ENCODE measurements at regions of chrX and their contacts with region 1.

Region 1: GRCh38 chrX:70433848-70434351 is 10.7 kb upstream of the DLG3 start:
- DNase-seq: peak; percentile 75
- H3K4me3 Mint-ChIP-seq: peak overlapping the region; percentile 84
- H3K27ac Mint-ChIP-seq: peak overlapping the region; percentile 87
- H3K4me1 Mint-ChIP-seq: peaks cover 32% of the 10 kb centered on the region
- H3K27me3 Mint-ChIP-seq: peaks cover 23% of the 10 kb centered on the region

Region 2: GRCh38 chrX:70226048-70226447 is 207.9 kb before region 1 on chrX:
- CTCF ChIA-PET with region 1: no interaction called
- POLR2A ChIA-PET with region 1: no interaction called
- DNase-seq: no peak
- H3K4me3 Mint-ChIP-seq: no peak overlapping the region
- H3K27ac Mint-ChIP-seq: no peak overlapping the region
- H3K4me1 Mint-ChIP-seq: no peaks in the 10 kb centered on the region
- H3K27me3 Mint-ChIP-seq: no peaks in the 10 kb centered on the region

Region 3: GRCh38 chrX:70386235-70386634 is 47.7 kb before region 1 on chrX:
- CTCF ChIA-PET with region 1: no interaction called
- POLR2A ChIA-PET with region 1: no interaction called
- DNase-seq: no peak
- H3K4me3 Mint-ChIP-seq: no peak overlapping the region
- H3K27ac Mint-ChIP-seq: no peak overlapping the region
- H3K4me1 Mint-ChIP-seq: peaks cover 16% of the 10 kb centered on the region
- H3K27me3 Mint-ChIP-seq: no peaks in the 10 kb centered on the region

Region 4: DNA sequence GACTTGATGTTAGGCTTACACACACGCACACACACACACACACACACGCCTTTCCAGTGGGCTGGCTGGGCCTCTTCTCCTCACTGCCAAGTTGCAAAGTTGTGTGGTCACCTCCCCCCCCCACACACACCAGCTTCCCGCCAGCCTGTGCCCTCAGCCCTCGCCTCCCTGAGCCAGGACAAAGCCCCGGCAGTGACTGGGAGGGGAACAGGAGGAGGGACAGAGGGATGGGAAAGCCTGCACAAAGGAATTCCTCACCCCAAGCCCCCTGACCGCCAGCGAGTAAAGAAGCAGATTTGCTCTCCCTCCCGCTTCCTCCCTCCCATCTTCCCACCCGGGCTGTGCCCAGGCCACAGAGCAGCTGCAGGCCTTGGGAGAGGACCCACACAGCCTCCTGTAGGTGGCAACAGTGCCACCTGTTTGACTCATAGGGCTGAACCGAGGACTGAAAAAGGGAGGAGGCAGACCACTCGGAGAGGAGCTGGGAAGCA is 11.0 kb before region 1 on chrX and contains the start of gene GDPD2:
- CTCF ChIA-PET with region 1: interaction called, 28 read pairs
- POLR2A ChIA-PET with region 1: no interaction called
- DNase-seq: no peak
- H3K4me3 Mint-ChIP-seq: no peak within 1 kb of the TSS
- H3K27ac Mint-ChIP-seq: no peak within 1 kb of the TSS
- H3K4me1 Mint-ChIP-seq: no peaks in the 10 kb centered on the region
- H3K27me3 Mint-ChIP-seq: no peaks in the 10 kb centered on the region
- total RNA-seq, gene GDPD2: 0.22 to 0.23 TPM

Region 5: DNA sequence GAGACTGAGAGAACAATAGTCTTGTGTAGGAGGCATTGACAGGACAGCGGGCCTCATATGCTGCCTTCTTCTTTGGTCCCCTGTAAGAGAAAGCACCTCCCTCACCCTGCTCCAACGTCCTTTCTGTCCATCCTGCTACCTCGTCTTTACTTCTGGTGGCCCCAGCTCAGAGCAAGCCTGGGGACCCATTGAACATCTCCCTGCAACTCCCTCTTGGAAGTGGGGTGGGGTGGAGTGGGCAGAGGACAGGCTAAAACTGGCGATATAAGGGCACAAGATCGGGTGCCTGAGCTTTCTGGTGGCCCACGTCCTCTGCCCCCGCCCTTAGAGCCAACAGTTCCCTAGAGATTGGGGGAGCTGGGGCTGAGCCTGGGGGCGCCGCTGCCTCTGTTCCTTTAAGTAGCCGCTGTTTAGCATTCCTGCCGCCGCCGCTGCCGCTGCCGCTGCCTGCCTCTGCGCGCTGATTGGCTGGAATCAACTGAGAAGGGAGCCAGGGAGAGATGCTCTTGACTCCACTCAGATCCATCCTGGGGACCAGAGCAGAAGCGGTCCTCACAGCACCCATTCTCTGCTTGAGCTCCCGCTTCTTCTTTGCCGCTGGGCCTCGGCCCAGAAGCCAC is 10.5 kb after region 1 on chrX and contains the start of gene DLG3:
- CTCF ChIA-PET with region 1: interaction called, 16 read pairs
- POLR2A ChIA-PET with region 1: no interaction called
- DNase-seq: no peak
- H3K4me3 Mint-ChIP-seq: no peak within 1 kb of the TSS
- H3K27ac Mint-ChIP-seq: no peak within 1 kb of the TSS
- H3K4me1 Mint-ChIP-seq: peaks cover 4% of the 10 kb centered on the region
- H3K27me3 Mint-ChIP-seq: peaks cover 50% of the 10 kb centered on the region
- total RNA-seq, gene DLG3: 19.9 to 20.1 TPM

Region 6: GRCh38 chrX:70452143-70452733 is 18.3 kb after region 1 on chrX:
- CTCF ChIA-PET with region 1: interaction called, 22 read pairs
- POLR2A ChIA-PET with region 1: no interaction called
- DNase-seq: peak; percentile 54
- H3K4me3 Mint-ChIP-seq: peak overlapping the region; percentile 74
- H3K27ac Mint-ChIP-seq: peak overlapping the region; percentile 85
- H3K4me1 Mint-ChIP-seq: peaks cover 41% of the 10 kb centered on the region
- H3K27me3 Mint-ChIP-seq: no peaks in the 10 kb centered on the region

Measured in activated CD4-positive, alpha-beta T cell treated with anti-CD3 and anti-CD28 coated beads, Interleukin-2, amount 10 ng/mL, durations not matched to agents 7 days and 5 days (primary cell).